ENCODE measurements at regions of chr7 and their contacts with region 1.

Region 1: GRCh38 chr7:74479961-74480829 is 26.5 kb downstream of the GTF2IRD1 start:
- DNase-seq: no peak
- H3K4me3 ChIP-seq: no peak overlapping the region
- H3K27ac ChIP-seq: peak overlapping the region; percentile 49; the same call in 1 of the 2 replicates
- H3K4me1 ChIP-seq: peaks cover 93% of the 10 kb centered on the region
- H3K27me3 ChIP-seq: no peaks in the 10 kb centered on the region
- CTCF ChIP-seq: no peak

Region 2: GRCh38 chr7:74429153-74429747 is 50.9 kb before region 1 on chr7:
- CTCF ChIA-PET with region 1: no interaction called
- POLR2A ChIA-PET with region 1: interaction called, 15 read pairs
- intact Hi-C with region 1: no loop called
- DNase-seq: no peak
- H3K4me3 ChIP-seq: no peak overlapping the region
- H3K27ac ChIP-seq: no peak overlapping the region
- H3K4me1 ChIP-seq: no peaks in the 10 kb centered on the region
- H3K27me3 ChIP-seq: no peaks in the 10 kb centered on the region
- CTCF ChIP-seq: no peak

Region 3: GRCh38 chr7:74464943-74465886 is 15.0 kb before region 1 on chr7:
- CTCF ChIA-PET with region 1: no interaction called
- POLR2A ChIA-PET with region 1: interaction called, 4 read pairs
- intact Hi-C with region 1: loop called (anchors 1 kb)
- DNase-seq: peak; percentile 80 to 85
- H3K4me3 ChIP-seq: no peak overlapping the region
- H3K27ac ChIP-seq: peak overlapping the region; percentile 43
- H3K4me1 ChIP-seq: peaks cover 38% of the 10 kb centered on the region
- H3K27me3 ChIP-seq: no peaks in the 10 kb centered on the region
- CTCF ChIP-seq: no peak

Region 4: GRCh38 chr7:74525880-74526279 is 45.7 kb after region 1 on chr7:
- CTCF ChIA-PET with region 1: no interaction called
- POLR2A ChIA-PET with region 1: no interaction called
- intact Hi-C with region 1: no loop called
- DNase-seq: peak in 1 of 2 experiments; percentile 31
- H3K4me3 ChIP-seq: no peak overlapping the region
- H3K27ac ChIP-seq: no peak overlapping the region
- H3K4me1 ChIP-seq: no peaks in the 10 kb centered on the region
- H3K27me3 ChIP-seq: no peaks in the 10 kb centered on the region
- CTCF ChIP-seq: no peak

Region 5: GRCh38 chr7:74598558-74598957 is 118.4 kb after region 1 on chr7:
- CTCF ChIA-PET with region 1: no interaction called
- POLR2A ChIA-PET with region 1: interaction called, 13 read pairs
- intact Hi-C with region 1: no loop called
- DNase-seq: no peak
- H3K4me3 ChIP-seq: no peak overlapping the region
- H3K27ac ChIP-seq: no peak overlapping the region
- H3K4me1 ChIP-seq: no peaks in the 10 kb centered on the region
- H3K27me3 ChIP-seq: no peaks in the 10 kb centered on the region
- CTCF ChIP-seq: no peak